ENCODE measurements at regions of chr3 and their contacts with region 1.

Region 1: GRCh38 chr3:149969940-149970715 is 567 bp downstream of the PFN2 start:
- DNase-seq: peak; percentile 59 to 90 (median 82)
- ATAC-seq: peak; percentile 56
- H3K4me3 ChIP-seq: peak overlapping the region; percentile 63 to 68
- H3K4me3 Mint-ChIP-seq: peak overlapping the region; percentile 95
- H3K27ac ChIP-seq: peak overlapping the region in 1 of 2 experiments; percentile 16
- H3K27ac Mint-ChIP-seq: peak overlapping the region; percentile 88
- H3K4me1 ChIP-seq: peaks cover 10% of the 10 kb centered on the region
- H3K4me1 Mint-ChIP-seq: peaks cover 23% of the 10 kb centered on the region
- H3K27me3 ChIP-seq: peaks cover 0 to 3% of the 10 kb centered on the region in 2 experiments
- H3K27me3 Mint-ChIP-seq: peaks cover 3% of the 10 kb centered on the region
- CTCF ChIP-seq: no peak

Region 2: GRCh38 chr3:148991194-148992026 is 978.7 kb before region 1 on chr3 and contains the start of gene GYG1:
- CTCF ChIA-PET with region 1: no interaction called
- POLR2A ChIA-PET with region 1: no interaction called
- intact Hi-C with region 1: loop called in 1 of 2 experiments (anchors 1 kb)
- DNase-seq: peak; percentile 59 to 94 (median 79)
- ATAC-seq: peak; percentile 81
- H3K4me3 ChIP-seq: peak within 1 kb of the TSS; percentile 46 to 66
- H3K4me3 Mint-ChIP-seq: peak within 1 kb of the TSS; percentile 80
- H3K27ac ChIP-seq: peak within 1 kb of the TSS; percentile 69 to 79
- H3K27ac Mint-ChIP-seq: peak within 1 kb of the TSS; percentile 84
- H3K4me1 ChIP-seq: peaks cover 18% of the 10 kb centered on the region
- H3K4me1 Mint-ChIP-seq: peaks cover 35% of the 10 kb centered on the region
- H3K27me3 ChIP-seq: no peaks in the 10 kb centered on the region
- H3K27me3 Mint-ChIP-seq: no peaks in the 10 kb centered on the region
- CTCF ChIP-seq: peak; percentile 45
- total RNA-seq, gene GYG1: 29.4 to 35.2 TPM

Region 3: DNA sequence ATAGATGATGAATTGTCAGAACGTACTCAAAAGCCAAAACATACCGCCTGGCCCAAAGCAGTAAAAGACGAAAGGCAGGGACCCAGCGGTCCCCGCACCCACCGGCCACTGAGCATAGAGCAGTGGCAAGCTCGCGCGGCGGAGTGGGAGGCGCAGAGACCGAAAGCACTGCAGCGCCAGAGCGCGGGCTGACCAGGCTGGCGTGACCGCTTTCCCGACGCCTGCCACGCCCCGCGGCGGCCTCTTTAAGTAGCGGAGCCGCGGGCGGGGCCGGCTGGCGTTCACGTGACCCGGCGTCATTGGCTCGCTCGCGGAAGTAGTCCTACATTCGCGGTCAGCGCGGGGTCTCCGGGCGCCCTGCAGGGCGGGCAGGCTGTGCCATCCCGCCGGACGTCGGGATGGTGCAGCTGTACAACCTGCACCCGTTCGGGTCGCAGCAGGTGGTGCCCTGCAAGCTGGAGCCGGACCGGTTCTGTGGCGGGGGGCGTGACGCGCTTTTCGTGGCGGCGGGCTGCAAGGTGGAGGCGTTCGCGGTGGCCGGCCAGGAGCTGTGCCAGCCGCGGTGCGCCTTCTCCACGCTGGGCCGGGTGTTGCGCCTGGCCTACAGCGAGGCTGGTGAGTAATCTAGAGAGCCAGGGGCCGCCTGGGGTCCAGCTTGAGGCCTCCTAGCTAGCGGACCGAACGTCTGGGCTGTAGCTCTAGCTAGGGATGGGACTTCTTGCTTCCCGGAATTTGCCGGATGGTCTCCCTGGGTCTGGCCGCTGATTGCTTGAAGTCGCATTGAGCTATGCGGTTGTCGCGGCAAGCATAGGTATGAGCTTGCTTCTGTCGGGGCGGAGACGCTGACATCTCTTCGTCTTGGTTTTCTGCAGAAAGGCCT is 840.6 kb before region 1 on chr3 and contains the start of gene HPS3:
- CTCF ChIA-PET with region 1: no interaction called
- POLR2A ChIA-PET with region 1: no interaction called
- intact Hi-C with region 1: loop called in 1 of 2 experiments (anchors 10 kb)
- DNase-seq: peak; percentile 52 to 91 (median 79)
- ATAC-seq: peak; percentile 80
- H3K4me3 ChIP-seq: peak within 1 kb of the TSS; percentile 96 to 97
- H3K4me3 Mint-ChIP-seq: peak within 1 kb of the TSS; percentile 96
- H3K27ac ChIP-seq: peak within 1 kb of the TSS; percentile 72 to 80
- H3K27ac Mint-ChIP-seq: peak within 1 kb of the TSS; percentile 89
- H3K4me1 ChIP-seq: peaks cover 28% of the 10 kb centered on the region
- H3K4me1 Mint-ChIP-seq: peaks cover 53% of the 10 kb centered on the region
- H3K27me3 ChIP-seq: peaks cover 0 to 3% of the 10 kb centered on the region in 2 experiments
- H3K27me3 Mint-ChIP-seq: peaks cover 2% of the 10 kb centered on the region
- CTCF ChIP-seq: no peak
- total RNA-seq, gene HPS3: 5.8 to 6.4 TPM

Region 4: GRCh38 chr3:149832086-149832485 is 138.0 kb before region 1 on chr3:
- CTCF ChIA-PET with region 1: no interaction called
- POLR2A ChIA-PET with region 1: no interaction called
- intact Hi-C with region 1: no loop called
- DNase-seq: no peak
- ATAC-seq: no peak
- H3K4me3 ChIP-seq: no peak overlapping the region
- H3K4me3 Mint-ChIP-seq: no peak overlapping the region
- H3K27ac ChIP-seq: no peak overlapping the region
- H3K27ac Mint-ChIP-seq: no peak overlapping the region
- H3K4me1 ChIP-seq: no peaks in the 10 kb centered on the region
- H3K4me1 Mint-ChIP-seq: peaks cover 19% of the 10 kb centered on the region
- H3K27me3 ChIP-seq: no peaks in the 10 kb centered on the region
- H3K27me3 Mint-ChIP-seq: no peaks in the 10 kb centered on the region
- CTCF ChIP-seq: no peak

Region 5: GRCh38 chr3:150183678-150184425 is 213.7 kb after region 1 on chr3:
- CTCF ChIA-PET with region 1: interaction called, 47 read pairs
- POLR2A ChIA-PET with region 1: interaction called, 3 read pairs
- intact Hi-C with region 1: loop called (anchors 1 kb)
- DNase-seq: peak in 8 of 9 experiments; percentile 12 to 67 (median 40)
- ATAC-seq: peak; percentile 69
- H3K4me3 ChIP-seq: no peak overlapping the region
- H3K4me3 Mint-ChIP-seq: no peak overlapping the region
- H3K27ac ChIP-seq: no peak overlapping the region
- H3K27ac Mint-ChIP-seq: no peak overlapping the region
- H3K4me1 ChIP-seq: no peaks in the 10 kb centered on the region
- H3K4me1 Mint-ChIP-seq: no peaks in the 10 kb centered on the region
- H3K27me3 ChIP-seq: no peaks in the 10 kb centered on the region
- H3K27me3 Mint-ChIP-seq: peaks cover 8% of the 10 kb centered on the region
- CTCF ChIP-seq: peak; percentile 31

Region 6: DNA sequence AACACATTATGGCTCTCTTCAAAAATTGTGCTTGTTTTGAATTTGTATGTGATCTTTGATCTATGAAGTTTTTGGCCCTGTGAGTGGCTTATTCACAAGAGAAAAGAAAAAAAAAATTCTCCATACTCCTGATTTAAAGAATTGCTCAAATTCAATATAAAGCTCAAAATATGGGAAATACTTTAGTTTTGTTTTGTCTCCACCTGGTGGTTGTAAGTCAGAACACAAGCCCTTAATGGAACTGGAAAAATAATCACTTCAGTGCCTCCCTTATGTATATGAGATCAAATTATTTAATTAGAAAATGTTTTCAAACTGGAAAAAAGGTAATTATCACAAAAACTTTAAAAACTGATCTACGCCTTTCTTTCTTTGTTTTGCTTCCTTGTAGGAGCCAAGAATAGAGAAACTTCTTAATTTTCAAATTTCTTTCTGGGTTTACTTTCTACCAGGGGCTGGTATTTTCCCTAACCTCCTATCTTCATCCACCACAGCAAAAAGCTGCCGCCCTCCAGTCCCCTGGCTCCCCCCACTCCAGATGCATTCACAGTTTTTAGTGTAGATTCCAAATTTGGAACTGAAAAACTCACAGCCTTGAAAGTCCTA is 525.5 kb after region 1 on chr3:
- CTCF ChIA-PET with region 1: no interaction called
- POLR2A ChIA-PET with region 1: no interaction called
- intact Hi-C with region 1: loop called (anchors 2 to 5 kb)
- DNase-seq: peak in 3 of 9 experiments; percentile 23 to 70 (median 62)
- ATAC-seq: peak; percentile 52
- H3K4me3 ChIP-seq: no peak overlapping the region
- H3K4me3 Mint-ChIP-seq: no peak overlapping the region
- H3K27ac ChIP-seq: no peak overlapping the region
- H3K27ac Mint-ChIP-seq: no peak overlapping the region
- H3K4me1 ChIP-seq: no peaks in the 10 kb centered on the region
- H3K4me1 Mint-ChIP-seq: no peaks in the 10 kb centered on the region
- H3K27me3 ChIP-seq: no peaks in the 10 kb centered on the region
- H3K27me3 Mint-ChIP-seq: no peaks in the 10 kb centered on the region
- CTCF ChIP-seq: peak; percentile 81

Region 7: GRCh38 chr3:150870396-150870795 is 900.3 kb after region 1 on chr3:
- CTCF ChIA-PET with region 1: no interaction called
- POLR2A ChIA-PET with region 1: no interaction called
- intact Hi-C with region 1: loop called in 1 of 2 experiments (anchors 10 kb)
- DNase-seq: no peak
- ATAC-seq: no peak
- H3K4me3 ChIP-seq: no peak overlapping the region
- H3K4me3 Mint-ChIP-seq: no peak overlapping the region
- H3K27ac ChIP-seq: no peak overlapping the region
- H3K27ac Mint-ChIP-seq: no peak overlapping the region
- H3K4me1 ChIP-seq: no peaks in the 10 kb centered on the region
- H3K4me1 Mint-ChIP-seq: peaks cover under 1% of the 10 kb centered on the region
- H3K27me3 ChIP-seq: no peaks in the 10 kb centered on the region
- H3K27me3 Mint-ChIP-seq: peaks cover 14% of the 10 kb centered on the region
- CTCF ChIP-seq: no peak